Activated CD4-positive, alpha-beta T cell treated with anti-CD3 and anti-CD28 coated beads for 36 hours (primary cell): ENCODE measurements at regions of chr2 and their contacts with region 1.

Region 1: DNA sequence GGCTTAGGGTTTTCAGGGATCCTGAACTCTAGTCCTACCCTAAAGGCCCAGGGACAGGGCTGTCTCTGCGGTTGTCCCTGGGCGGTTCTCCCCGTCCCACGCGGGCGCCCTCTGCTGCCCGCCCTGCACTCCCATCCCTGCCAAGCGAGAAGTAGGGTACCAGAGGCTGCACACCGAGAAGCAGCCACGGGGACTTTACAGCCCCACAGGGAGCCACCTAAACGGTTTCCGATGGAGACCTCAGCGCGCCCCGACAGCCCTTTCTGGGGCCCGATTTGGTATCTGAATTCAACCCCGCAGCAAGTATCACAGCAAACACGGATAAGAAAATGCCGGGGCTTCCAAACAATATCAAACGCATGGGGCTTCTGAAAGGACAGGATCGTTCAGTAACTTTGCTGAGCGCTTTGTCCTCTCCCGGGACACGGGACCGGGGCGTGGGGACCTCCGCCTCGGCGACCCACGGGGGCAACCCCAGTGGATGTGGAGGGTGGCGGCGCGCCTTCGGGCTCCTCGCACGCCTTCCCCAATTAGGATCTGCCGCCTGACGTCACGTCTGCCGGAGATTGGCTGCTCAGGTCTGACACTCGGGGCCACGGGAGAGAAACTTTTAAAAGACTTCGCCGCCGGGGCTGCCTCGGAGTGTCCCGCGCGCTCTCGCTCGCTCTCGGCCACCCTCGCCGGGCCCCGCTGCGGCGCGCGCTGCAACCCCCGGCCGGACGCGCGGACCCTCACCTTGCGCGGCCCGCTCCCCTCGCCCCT is at the start of gene LTBP1:
- DNase-seq: peak; percentile 78
- ATAC-seq: peak; percentile 81
- H3K4me3 Mint-ChIP-seq: peak within 1 kb of the TSS; percentile 67
- H3K27ac Mint-ChIP-seq: no peak within 1 kb of the TSS
- H3K4me1 Mint-ChIP-seq: no peaks in the 10 kb centered on the region
- H3K27me3 Mint-ChIP-seq: peaks cover 23% of the 10 kb centered on the region
- total RNA-seq, gene LTBP1: 0.14 to 0.26 TPM

Region 2: DNA sequence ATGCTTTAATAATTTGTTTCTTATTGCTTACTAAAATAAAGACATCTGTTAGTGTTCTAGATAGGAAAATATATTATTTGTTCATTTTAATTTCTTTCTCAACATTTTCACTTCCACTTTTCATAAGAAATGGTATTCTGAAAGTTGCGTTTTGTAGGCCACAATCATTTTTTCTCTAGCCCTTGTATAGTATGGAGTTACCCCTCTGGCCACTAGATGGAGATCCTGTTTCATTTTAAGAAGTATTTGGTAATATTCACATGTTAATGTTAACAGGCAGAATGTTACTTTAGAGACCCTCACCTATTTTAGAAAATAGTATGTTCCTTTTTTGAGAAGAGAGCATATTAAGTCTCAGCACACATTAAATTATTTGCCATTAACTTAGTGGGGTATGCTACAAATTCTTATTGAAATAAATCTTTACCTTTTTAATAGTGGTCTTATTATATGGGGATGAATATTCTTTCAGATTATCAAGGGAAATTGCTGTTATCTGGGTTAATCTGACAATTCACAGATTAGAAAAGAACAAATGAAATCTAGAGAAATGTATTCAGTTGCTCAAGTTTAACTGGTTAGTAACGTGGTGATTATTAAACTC is 392.6 kb before region 1 on chr2:
- CTCF ChIA-PET with region 1: no interaction called
- POLR2A ChIA-PET with region 1: no interaction called
- intact Hi-C with region 1: loop called in 1 of 2 experiments (anchors 2 kb)
- DNase-seq: no peak
- ATAC-seq: peak; percentile 63
- H3K4me3 Mint-ChIP-seq: no peak overlapping the region
- H3K27ac Mint-ChIP-seq: no peak overlapping the region
- H3K4me1 Mint-ChIP-seq: no peaks in the 10 kb centered on the region
- H3K27me3 Mint-ChIP-seq: no peaks in the 10 kb centered on the region

Region 3: GRCh38 chr2:32772638-32773447 is 173.7 kb before region 1 on chr2:
- CTCF ChIA-PET with region 1: no interaction called
- POLR2A ChIA-PET with region 1: no interaction called
- intact Hi-C with region 1: loop called in 1 of 2 experiments (anchors 5 kb)
- DNase-seq: no peak
- ATAC-seq: no peak
- H3K4me3 Mint-ChIP-seq: no peak overlapping the region
- H3K27ac Mint-ChIP-seq: no peak overlapping the region
- H3K4me1 Mint-ChIP-seq: peaks cover 3% of the 10 kb centered on the region
- H3K27me3 Mint-ChIP-seq: no peaks in the 10 kb centered on the region

Region 4: DNA sequence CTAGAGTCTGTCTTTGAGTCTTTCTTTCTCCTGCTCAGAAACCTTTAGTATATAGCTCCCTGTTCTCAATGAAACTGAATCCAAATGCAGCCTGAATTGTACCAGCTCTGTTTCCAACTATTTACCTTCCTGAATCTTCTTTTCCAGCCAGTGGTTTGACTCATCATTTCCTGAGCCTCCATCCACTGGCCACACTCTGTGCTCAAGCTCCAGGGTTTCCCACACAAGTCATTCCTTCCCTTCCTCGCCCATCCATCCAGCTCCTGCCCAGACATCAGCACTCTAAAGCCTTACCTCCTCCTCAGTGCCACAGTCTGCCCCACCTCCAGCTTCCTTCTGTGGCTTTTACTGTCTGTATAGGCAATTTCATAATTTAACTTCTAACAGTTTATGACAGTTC is 296.4 kb after region 1 on chr2:
- CTCF ChIA-PET with region 1: no interaction called
- POLR2A ChIA-PET with region 1: no interaction called
- intact Hi-C with region 1: no loop called
- DNase-seq: no peak
- ATAC-seq: no peak
- H3K4me3 Mint-ChIP-seq: no peak overlapping the region
- H3K27ac Mint-ChIP-seq: no peak overlapping the region
- H3K4me1 Mint-ChIP-seq: no peaks in the 10 kb centered on the region
- H3K27me3 Mint-ChIP-seq: no peaks in the 10 kb centered on the region

Region 5: DNA sequence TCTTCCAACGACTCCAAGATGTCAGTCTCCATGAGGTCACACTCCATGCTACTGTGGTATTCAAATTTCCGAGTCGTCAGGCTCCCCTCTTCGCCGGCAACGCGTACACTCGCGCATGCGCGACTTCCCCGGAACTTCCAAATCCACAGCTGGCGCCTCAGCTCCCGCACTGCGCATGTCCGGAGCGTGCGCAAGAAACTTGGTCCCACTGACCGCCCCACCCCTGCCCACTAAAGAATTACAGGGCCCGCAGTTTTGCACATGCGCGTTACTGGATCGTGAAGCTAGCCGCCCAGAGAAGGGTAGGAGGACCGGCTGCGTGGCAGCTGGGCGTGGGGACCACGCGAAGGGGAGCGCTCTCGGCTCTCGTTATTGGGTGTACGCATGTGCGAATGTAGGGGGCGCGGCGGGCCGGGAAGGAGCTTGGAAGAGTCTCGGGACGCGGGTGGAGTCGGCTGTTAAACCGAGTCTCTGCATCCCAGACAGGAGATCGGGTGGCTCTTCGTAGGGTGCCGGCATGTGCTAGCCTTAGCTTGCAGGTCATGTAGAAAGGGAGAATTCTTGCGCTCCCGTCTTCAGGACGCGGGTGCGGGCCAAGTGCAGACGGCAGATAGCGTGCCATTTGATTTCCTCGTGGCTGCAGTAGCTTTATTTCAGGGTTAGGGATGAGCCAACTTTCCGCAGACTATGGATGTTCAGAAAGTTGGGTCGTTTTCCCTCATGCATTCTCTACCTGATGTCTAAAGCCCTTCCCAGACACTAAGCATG is 652.9 kb after region 1 on chr2 and contains the start of gene FAM98A:
- CTCF ChIA-PET with region 1: interaction called, 3 read pairs
- POLR2A ChIA-PET with region 1: no interaction called
- intact Hi-C with region 1: loop called in 1 of 2 experiments (anchors 5 kb)
- DNase-seq: peak; percentile 99
- ATAC-seq: peak; percentile 91
- H3K4me3 Mint-ChIP-seq: peak within 1 kb of the TSS; percentile 88
- H3K27ac Mint-ChIP-seq: peak within 1 kb of the TSS; percentile 93
- H3K4me1 Mint-ChIP-seq: peaks cover 24% of the 10 kb centered on the region
- H3K27me3 Mint-ChIP-seq: no peaks in the 10 kb centered on the region
- total RNA-seq, gene FAM98A: 42.9 to 61.5 TPM